MCF 10A (cell line): ENCODE measurements at regions of chr2 and their contacts with region 1.

Region 1: DNA sequence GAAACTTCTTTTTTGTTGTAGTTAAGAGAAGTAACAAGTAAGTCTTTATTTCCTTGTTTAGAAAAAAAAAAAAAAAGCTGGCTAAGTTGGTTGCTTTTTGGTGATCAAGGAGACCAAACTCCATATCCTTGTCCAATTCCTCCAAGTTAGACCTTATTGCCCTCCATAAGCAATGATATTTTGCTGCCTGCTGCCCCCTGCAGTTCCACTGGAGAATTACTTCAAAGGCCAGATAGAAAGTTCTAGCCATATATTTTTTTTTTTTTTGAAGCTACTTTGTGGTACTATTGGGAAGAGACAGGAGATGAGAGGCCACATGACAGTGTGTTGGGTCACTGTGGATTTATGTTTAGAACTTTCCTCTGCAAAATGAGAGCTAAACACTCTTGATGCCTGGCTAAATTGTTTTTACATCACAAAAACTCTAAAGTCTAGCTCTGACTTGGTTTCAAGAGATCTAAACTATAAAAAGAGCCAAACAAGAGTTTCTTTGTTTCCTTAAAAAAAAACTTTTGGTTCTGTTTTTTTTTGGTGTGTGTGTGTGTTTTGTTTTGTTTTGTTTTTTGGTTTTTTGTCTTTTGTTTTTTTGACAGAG is 80.7 kb upstream of the RASGRP3 start:
- DNase-seq: peak; percentile 72
- H3K4me3 Mint-ChIP-seq: no peak overlapping the region
- H3K27ac Mint-ChIP-seq: no peak overlapping the region
- H3K4me1 Mint-ChIP-seq: no peaks in the 10 kb centered on the region
- H3K27me3 Mint-ChIP-seq: no peaks in the 10 kb centered on the region
- CTCF ChIP-seq: peak; percentile 35

Region 2: GRCh38 chr2:33372940-33373553 is 22.7 kb before region 1 on chr2:
- CTCF ChIA-PET with region 1: interaction called, 10 read pairs
- POLR2A ChIA-PET with region 1: no interaction called
- intact Hi-C with region 1: no loop called
- DNase-seq: peak; percentile 73
- H3K4me3 Mint-ChIP-seq: no peak overlapping the region
- H3K27ac Mint-ChIP-seq: no peak overlapping the region
- H3K4me1 Mint-ChIP-seq: peaks cover 13% of the 10 kb centered on the region
- H3K27me3 Mint-ChIP-seq: no peaks in the 10 kb centered on the region
- CTCF ChIP-seq: peak; percentile 72

Region 3: DNA sequence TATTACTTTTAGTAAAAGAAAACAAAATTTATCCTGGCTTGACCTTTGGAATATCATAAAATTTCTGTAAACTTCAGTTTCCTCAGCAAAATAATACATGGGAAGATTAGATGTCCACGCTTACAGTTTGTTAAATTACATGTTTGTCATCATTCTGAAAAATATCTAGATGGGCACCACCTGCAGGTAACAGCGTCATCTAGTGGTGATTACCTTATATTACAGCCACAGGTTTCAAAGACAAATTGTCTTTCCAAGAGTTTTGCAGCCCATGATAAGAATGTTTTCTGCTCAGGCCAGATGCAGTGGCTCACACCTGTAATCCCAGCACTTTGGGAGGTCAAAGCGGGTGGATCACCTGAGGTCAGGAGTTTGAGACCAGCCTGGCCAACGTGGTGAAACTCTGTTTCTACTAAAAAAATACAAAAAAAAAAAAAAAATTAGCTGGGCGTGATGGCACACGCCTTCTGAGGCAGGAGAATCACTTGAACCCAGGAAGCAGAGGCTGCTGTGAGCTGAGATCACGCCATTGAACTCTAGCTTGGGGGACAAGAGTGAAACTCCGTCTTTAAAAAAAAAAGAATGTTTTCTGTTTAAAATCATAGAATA is 15.6 kb before region 1 on chr2:
- CTCF ChIA-PET with region 1: interaction called, 19 read pairs
- POLR2A ChIA-PET with region 1: interaction called, 3 read pairs
- intact Hi-C with region 1: no loop called
- DNase-seq: peak; percentile 18
- H3K4me3 Mint-ChIP-seq: no peak overlapping the region
- H3K27ac Mint-ChIP-seq: no peak overlapping the region
- H3K4me1 Mint-ChIP-seq: no peaks in the 10 kb centered on the region
- H3K27me3 Mint-ChIP-seq: no peaks in the 10 kb centered on the region
- CTCF ChIP-seq: peak; percentile 82